PC-3 (cell line): ENCODE measurements at regions of chr5 and their contacts with region 1.

Region 1: GRCh38 chr5:147558826-147559225 is 49.0 kb upstream of the DPYSL3 start:
- DNase-seq: peak; percentile 52
- ATAC-seq: peak; percentile 94
- H3K4me3 ChIP-seq: no peak overlapping the region
- H3K27ac ChIP-seq: no peak overlapping the region
- H3K4me1 ChIP-seq: no peaks in the 10 kb centered on the region
- H3K27me3 ChIP-seq: no peaks in the 10 kb centered on the region
- CTCF ChIP-seq: peak; percentile 73

Region 2: DNA sequence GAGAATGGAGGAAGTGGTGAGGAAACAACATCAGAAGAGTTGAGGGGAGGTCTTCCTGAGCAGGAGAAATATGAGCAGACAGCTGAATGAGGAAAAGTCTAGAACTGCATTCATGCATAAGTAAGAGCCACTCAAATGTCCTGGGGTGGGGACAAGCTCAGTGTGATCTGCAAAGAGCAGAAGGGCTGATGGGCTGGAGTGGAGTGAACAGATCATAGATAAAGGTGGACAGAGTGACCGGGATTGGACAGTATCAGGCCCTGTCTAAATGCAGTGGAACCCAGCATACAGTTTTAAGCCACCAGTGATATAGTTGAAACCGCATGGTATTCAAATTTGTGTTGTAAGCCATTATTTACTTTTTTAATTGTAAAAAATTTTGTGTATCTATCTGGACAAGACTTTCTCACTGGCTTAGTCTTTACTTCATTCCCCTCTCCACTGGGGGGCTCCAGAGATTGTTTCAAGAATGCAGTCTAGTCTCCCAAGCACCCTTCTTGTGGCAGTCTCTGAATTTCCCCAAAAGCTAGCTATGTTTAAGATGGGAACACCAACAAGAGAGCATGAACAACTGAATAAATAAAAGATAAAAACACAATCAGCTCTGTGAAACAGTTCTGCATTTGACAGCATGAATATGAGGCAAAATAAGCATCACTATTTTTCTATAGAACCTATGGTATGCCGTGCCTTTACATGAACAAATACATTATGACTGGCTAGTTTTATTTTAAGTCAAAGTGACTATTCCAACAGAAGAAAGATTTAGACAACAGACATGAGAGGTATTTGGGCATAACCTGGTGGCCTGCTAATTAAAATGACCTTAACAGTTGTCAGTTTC is 334.7 kb before region 1 on chr5:
- CTCF ChIA-PET with region 1: no interaction called
- POLR2A ChIA-PET with region 1: no interaction called
- intact Hi-C with region 1: loop called (anchors 5 kb)
- DNase-seq: peak; percentile 55
- ATAC-seq: peak; percentile 87
- H3K4me3 ChIP-seq: no peak overlapping the region
- H3K27ac ChIP-seq: no peak overlapping the region
- H3K4me1 ChIP-seq: peaks cover 4% of the 10 kb centered on the region; the same call in 1 of the 2 replicates
- H3K27me3 ChIP-seq: 0 out of 2 replicates have a peak, but pooled peaks cover 4% of the 10 kb centered on the region
- CTCF ChIP-seq: peak; percentile 69

Region 3: DNA sequence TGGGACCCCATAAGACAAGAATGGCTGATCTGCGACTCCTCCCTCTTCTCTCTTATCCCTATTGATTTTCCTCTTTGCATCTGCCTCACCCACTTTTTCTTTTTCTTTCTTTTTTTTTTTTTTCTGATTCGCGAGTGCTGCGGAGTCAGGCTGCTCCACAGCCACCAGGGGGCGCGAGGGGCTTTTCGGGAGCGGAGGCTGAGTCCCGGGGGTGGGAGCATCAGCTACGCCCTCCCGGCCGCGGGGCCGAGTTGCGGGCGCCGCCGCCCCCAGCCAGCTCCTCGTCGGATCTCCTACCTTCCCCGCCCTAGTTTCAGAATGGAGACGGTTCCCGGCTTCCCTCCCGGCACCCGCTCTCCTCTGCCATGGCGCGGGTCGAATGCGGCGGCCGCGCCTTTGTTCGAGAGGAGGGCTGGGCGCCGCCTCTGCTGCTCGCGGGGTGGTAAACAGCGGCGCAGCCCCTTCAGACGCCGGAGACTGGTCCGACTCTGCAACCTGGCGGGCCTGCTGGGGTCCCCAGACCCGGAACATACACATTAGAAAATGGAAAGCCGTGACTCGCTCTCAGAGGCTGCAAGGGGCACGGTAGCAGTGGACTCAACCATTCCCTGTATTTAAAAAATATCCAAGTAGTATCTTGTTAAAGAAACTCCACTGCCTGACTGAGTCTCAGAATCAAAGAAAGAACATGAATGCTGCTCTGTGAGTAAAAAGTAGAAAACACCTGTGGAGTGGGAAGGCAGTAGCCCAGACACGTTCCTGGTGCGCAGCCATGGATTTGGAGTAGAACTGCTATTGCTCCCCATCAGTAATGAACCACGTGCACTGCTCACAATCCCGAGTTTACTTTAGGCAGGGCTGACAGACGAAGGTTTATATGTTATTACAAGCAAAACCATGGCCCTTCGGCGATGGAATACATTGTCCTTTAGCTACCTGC is 104.7 kb before region 1 on chr5:
- CTCF ChIA-PET with region 1: interaction called, 7 read pairs
- POLR2A ChIA-PET with region 1: no interaction called
- intact Hi-C with region 1: loop called (anchors 1 kb)
- DNase-seq: peak; percentile 71
- ATAC-seq: peak; percentile 75
- H3K4me3 ChIP-seq: peak overlapping the region; percentile 87
- H3K27ac ChIP-seq: no peak overlapping the region
- H3K4me1 ChIP-seq: no peaks in the 10 kb centered on the region; the same call in 1 of the 2 replicates
- H3K27me3 ChIP-seq: peaks cover 4% of the 10 kb centered on the region
- CTCF ChIP-seq: peak; percentile 85

Region 4: GRCh38 chr5:147464211-147464610 is 94.6 kb before region 1 on chr5:
- CTCF ChIA-PET with region 1: interaction called, 9 read pairs
- POLR2A ChIA-PET with region 1: no interaction called
- intact Hi-C with region 1: loop called (anchors 1 kb)
- DNase-seq: peak; percentile 57
- ATAC-seq: peak; percentile 67
- H3K4me3 ChIP-seq: no peak overlapping the region
- H3K27ac ChIP-seq: no peak overlapping the region
- H3K4me1 ChIP-seq: no peaks in the 10 kb centered on the region
- H3K27me3 ChIP-seq: no peaks in the 10 kb centered on the region
- CTCF ChIP-seq: peak; percentile 67

Region 5: DNA sequence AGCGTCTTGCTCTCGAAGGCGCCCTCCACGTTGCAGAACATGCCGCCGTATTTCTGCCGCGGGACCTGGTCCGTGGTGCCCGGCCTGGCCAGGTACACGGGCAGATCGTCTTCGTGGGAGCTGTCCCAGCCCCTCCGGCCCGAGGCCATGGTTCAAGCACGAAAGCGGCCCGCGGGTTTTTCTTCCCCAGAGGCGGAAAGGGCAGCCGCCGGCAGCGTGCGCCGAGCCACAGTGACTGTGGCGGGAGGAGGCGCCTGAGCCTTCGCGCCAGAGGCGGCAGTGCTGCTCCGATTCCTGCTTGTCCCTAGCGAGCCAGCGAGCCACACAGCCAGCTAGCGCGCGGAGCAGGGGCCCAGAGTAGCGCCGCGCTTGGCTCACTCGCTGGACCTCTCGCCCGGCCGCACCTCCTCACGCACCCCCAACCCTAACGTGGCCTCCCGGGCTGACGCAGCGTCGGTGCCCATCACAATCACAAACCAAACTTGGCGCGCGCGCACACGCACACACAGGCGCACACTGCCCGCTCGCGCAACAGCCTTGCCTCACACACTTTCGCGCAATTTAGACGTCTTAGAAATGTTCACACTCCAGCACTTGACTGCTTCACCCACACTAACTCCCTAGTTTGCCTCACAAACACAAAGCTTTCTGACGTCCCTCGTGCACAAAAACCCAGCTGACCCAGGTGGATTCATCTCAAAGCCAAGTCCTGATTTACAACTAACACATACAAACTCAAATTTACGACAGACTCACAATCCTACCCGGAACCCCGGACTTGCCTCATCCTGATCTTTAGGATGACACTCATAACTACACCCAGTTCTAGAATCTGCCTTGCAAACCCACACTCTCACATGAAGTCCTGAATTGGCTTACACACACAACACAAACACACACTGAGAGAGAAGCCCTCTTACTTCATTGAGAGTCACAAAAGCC is 48.8 kb before region 1 on chr5 and contains the start of gene DPYSL3:
- CTCF ChIA-PET with region 1: no interaction called
- POLR2A ChIA-PET with region 1: no interaction called
- intact Hi-C with region 1: loop called (anchors 1 kb)
- DNase-seq: peak; percentile 61
- ATAC-seq: peak; percentile 84
- H3K4me3 ChIP-seq: peak within 1 kb of the TSS; percentile 80
- H3K27ac ChIP-seq: no peak within 1 kb of the TSS
- H3K4me1 ChIP-seq: peaks cover 22% of the 10 kb centered on the region
- H3K27me3 ChIP-seq: no peaks in the 10 kb centered on the region
- CTCF ChIP-seq: peak; percentile 32; the same call in 1 of the 2 replicates
- total RNA-seq, gene DPYSL3: 19.5 and 20.6 TPM in 2 replicates

Region 6: GRCh38 chr5:147576646-147577535 is 18.1 kb after region 1 on chr5:
- CTCF ChIA-PET with region 1: interaction called, 17 read pairs
- POLR2A ChIA-PET with region 1: no interaction called
- intact Hi-C with region 1: no loop called
- DNase-seq: peak; percentile 77
- ATAC-seq: peak; percentile 80
- H3K4me3 ChIP-seq: no peak overlapping the region
- H3K27ac ChIP-seq: no peak overlapping the region
- H3K4me1 ChIP-seq: no peaks in the 10 kb centered on the region
- H3K27me3 ChIP-seq: no peaks in the 10 kb centered on the region
- CTCF ChIP-seq: peak; percentile 95

Region 7: DNA sequence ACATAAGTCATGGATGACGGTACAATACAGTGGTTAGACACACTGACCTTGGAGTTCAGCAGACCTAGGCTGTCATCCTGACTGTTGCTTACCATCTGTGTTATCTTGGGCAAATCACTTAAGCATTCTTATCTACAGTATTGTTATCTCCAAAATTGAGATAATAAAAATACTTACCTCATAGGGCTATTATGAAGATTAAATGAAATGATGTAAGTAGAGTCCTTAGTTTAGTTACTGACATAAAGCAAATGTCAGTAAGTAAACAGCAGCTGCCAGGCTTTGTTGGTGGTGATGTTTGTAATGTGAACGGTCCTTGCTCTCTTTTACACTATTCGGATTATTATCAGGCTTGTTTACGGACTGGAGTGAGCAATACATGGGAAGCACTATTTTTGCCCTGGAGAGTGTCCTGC is 58.4 kb after region 1 on chr5:
- CTCF ChIA-PET with region 1: no interaction called
- POLR2A ChIA-PET with region 1: no interaction called
- intact Hi-C with region 1: no loop called
- DNase-seq: no peak
- ATAC-seq: no peak
- H3K4me3 ChIP-seq: no peak overlapping the region
- H3K27ac ChIP-seq: no peak overlapping the region
- H3K4me1 ChIP-seq: peaks cover 15% of the 10 kb centered on the region; the same call in 1 of the 2 replicates
- H3K27me3 ChIP-seq: 0 out of 2 replicates have a peak, but pooled peaks cover 1% of the 10 kb centered on the region
- CTCF ChIP-seq: no peak